SK-N-SH (cell line): ENCODE measurements at regions of chr11 and their contacts with region 1.

Region 1: GRCh38 chr11:71251761-71252443 is 475 bp downstream of the SHANK2 start:
- DNase-seq: peak; percentile 92
- H3K4me3 ChIP-seq: no peak overlapping the region
- H3K27ac ChIP-seq: no peak overlapping the region
- H3K4me1 ChIP-seq: peaks cover 0 to 3% of the 10 kb centered on the region in 2 experiments; a peak in 1 of 4 replicates
- H3K27me3 ChIP-seq: no peaks in the 10 kb centered on the region
- CTCF ChIP-seq: no peak
- EP300 ChIP-seq: no peak
- RAD21 ChIP-seq: peak; percentile 14; the same call in 1 of the 2 replicates

Region 2: DNA sequence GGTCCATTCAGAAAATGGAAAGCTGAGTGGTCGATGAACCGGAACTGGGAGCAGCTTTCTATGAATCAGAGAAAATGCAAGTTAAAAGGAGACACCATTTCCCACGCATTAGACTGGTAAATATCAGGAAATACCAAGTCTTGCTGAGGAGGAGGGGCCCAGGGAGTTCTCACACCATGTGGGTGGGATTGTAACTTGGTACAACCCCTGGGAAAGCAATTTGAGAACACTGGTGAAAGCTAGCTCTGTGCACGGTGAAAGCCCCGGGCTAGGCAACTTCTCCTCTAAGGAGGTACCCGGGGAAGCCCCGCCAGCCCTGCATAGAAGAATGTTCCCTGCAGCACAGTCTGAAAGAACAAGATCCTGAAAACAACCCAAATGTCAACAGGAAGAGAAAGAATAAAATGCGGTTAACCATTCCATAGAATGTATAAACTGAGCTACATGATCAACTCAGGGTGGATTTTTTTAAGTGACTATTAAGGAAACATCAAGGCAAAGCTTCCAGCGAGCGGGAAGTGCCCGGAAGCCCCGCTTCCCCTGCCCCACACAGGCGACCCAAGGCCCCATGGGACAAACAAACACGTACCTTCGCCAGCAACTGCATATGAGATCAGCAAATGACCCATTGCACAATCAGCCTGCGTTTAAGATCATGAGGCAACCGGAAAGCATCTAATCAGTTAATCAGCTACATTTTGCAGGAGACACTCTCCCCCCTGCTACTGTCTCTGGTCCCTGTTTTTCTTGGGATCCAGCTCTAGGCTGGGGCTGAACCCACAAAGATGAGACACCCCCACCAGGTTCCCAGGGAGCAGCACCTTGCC is 10.8 kb before region 1 on chr11:
- CTCF ChIA-PET with region 1: interaction called, 22 read pairs
- POLR2A ChIA-PET with region 1: no interaction called
- DNase-seq: peak; percentile 12
- H3K4me3 ChIP-seq: no peak overlapping the region
- H3K27ac ChIP-seq: no peak overlapping the region
- H3K4me1 ChIP-seq: no peaks in the 10 kb centered on the region
- H3K27me3 ChIP-seq: no peaks in the 10 kb centered on the region
- CTCF ChIP-seq: no peak
- EP300 ChIP-seq: no peak
- RAD21 ChIP-seq: no peak

Region 3: GRCh38 chr11:71262069-71262468 is 10.2 kb after region 1 on chr11:
- CTCF ChIA-PET with region 1: interaction called, 10 read pairs
- POLR2A ChIA-PET with region 1: no interaction called
- DNase-seq: no peak
- H3K4me3 ChIP-seq: no peak overlapping the region
- H3K27ac ChIP-seq: no peak overlapping the region
- H3K4me1 ChIP-seq: peaks cover 0 to 3% of the 10 kb centered on the region in 2 experiments; a peak in 1 of 4 replicates
- H3K27me3 ChIP-seq: no peaks in the 10 kb centered on the region
- CTCF ChIP-seq: no peak
- EP300 ChIP-seq: no peak
- RAD21 ChIP-seq: no peak

Region 4: GRCh38 chr11:71302911-71303310 is 51.0 kb after region 1 on chr11:
- CTCF ChIA-PET with region 1: no interaction called
- POLR2A ChIA-PET with region 1: no interaction called
- DNase-seq: no peak
- H3K4me3 ChIP-seq: no peak overlapping the region
- H3K27ac ChIP-seq: no peak overlapping the region
- H3K4me1 ChIP-seq: no peaks in the 10 kb centered on the region
- H3K27me3 ChIP-seq: no peaks in the 10 kb centered on the region
- CTCF ChIP-seq: no peak
- EP300 ChIP-seq: no peak
- RAD21 ChIP-seq: no peak